Posterior vena cava (tissue), 2 donors: ENCODE measurements at regions of chr17 and their contacts with region 1.

Region 1: GRCh38 chr17:63369233-63369632 is 76.9 kb downstream of the CYB561 start:
- DNase-seq: no peak

Region 2: GRCh38 chr17:63309021-63309420 is 60.2 kb before region 1 on chr17:
- intact Hi-C with region 1: no loop called
- DNase-seq: no peak

Region 3: DNA sequence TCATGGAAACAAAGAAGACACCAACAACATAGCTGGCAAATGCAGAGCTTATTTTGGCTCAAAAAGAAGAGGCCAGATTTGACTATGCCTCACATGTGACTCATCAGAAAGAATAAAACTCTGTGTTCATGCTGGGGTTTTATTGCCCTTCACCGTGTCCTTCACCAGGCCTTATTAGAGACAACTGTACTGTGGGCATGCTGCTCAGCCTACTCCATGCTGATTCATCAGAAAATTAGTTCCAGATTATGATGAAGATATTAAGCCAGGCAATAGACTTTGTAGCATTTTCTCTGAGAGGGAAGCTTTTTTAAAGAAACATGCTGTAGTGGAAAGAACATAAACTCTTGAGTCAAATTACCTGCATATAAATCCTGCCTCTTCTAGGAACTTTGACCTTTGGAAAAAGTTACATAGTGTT is 12.9 kb before region 1 on chr17:
- intact Hi-C with region 1: loop called in 1 of 2 experiments (anchors 1 kb)
- DNase-seq: no peak

Region 4: GRCh38 chr17:63395075-63395805 is 26.0 kb after region 1 on chr17:
- intact Hi-C with region 1: loop called in 1 of 2 experiments (anchors 1 kb)
- DNase-seq: no peak